Activated B cell treated with CpG ODN at 0.5 μM for 24 hours (primary cell): ENCODE measurements at regions of chr15 and their contacts with region 1.

Region 1: GRCh38 chr15:99704444-99704838 is 28.8 kb downstream of the LYSMD4 start:
- DNase-seq: no peak
- ATAC-seq: peak; percentile 83
- H3K4me3 Mint-ChIP-seq: no peak overlapping the region
- H3K27ac Mint-ChIP-seq: peak overlapping the region; percentile 24
- H3K4me1 Mint-ChIP-seq: peaks cover 27% of the 10 kb centered on the region
- H3K27me3 Mint-ChIP-seq: no peaks in the 10 kb centered on the region
- CTCF ChIP-seq: no peak

Region 2: GRCh38 chr15:99135194-99135593 is 569.2 kb before region 1 on chr15:
- CTCF ChIA-PET with region 1: no interaction called
- POLR2A ChIA-PET with region 1: no interaction called
- intact Hi-C with region 1: no loop called
- DNase-seq: no peak
- ATAC-seq: no peak
- H3K4me3 Mint-ChIP-seq: no peak overlapping the region
- H3K27ac Mint-ChIP-seq: no peak overlapping the region
- H3K4me1 Mint-ChIP-seq: no peaks in the 10 kb centered on the region
- H3K27me3 Mint-ChIP-seq: no peaks in the 10 kb centered on the region
- CTCF ChIP-seq: no peak

Region 3: GRCh38 chr15:99265541-99266070 is 438.8 kb before region 1 on chr15:
- CTCF ChIA-PET with region 1: interaction called, 10 read pairs
- POLR2A ChIA-PET with region 1: no interaction called
- intact Hi-C with region 1: no loop called
- DNase-seq: no peak
- ATAC-seq: no peak
- H3K4me3 Mint-ChIP-seq: no peak overlapping the region
- H3K27ac Mint-ChIP-seq: no peak overlapping the region
- H3K4me1 Mint-ChIP-seq: no peaks in the 10 kb centered on the region
- H3K27me3 Mint-ChIP-seq: no peaks in the 10 kb centered on the region
- CTCF ChIP-seq: no peak

Region 4: GRCh38 chr15:99282121-99282520 is 422.3 kb before region 1 on chr15:
- CTCF ChIA-PET with region 1: interaction called, 143 read pairs
- POLR2A ChIA-PET with region 1: interaction called, 4 read pairs
- intact Hi-C with region 1: loop called (anchors 1 kb)
- DNase-seq: no peak
- ATAC-seq: no peak
- H3K4me3 Mint-ChIP-seq: no peak overlapping the region
- H3K27ac Mint-ChIP-seq: no peak overlapping the region
- H3K4me1 Mint-ChIP-seq: peaks cover 11% of the 10 kb centered on the region
- H3K27me3 Mint-ChIP-seq: no peaks in the 10 kb centered on the region
- CTCF ChIP-seq: no peak

Region 5: GRCh38 chr15:99371180-99372103 is 333.0 kb before region 1 on chr15:
- CTCF ChIA-PET with region 1: interaction called, 27 read pairs
- POLR2A ChIA-PET with region 1: no interaction called
- intact Hi-C with region 1: loop called (anchors 1 kb)
- DNase-seq: no peak
- ATAC-seq: peak; percentile 73
- H3K4me3 Mint-ChIP-seq: no peak overlapping the region
- H3K27ac Mint-ChIP-seq: peak overlapping the region; percentile 10
- H3K4me1 Mint-ChIP-seq: peaks cover 16% of the 10 kb centered on the region
- H3K27me3 Mint-ChIP-seq: no peaks in the 10 kb centered on the region
- CTCF ChIP-seq: no peak

Region 6: GRCh38 chr15:99507504-99508310 is 196.7 kb before region 1 on chr15:
- CTCF ChIA-PET with region 1: interaction called, 36 read pairs
- POLR2A ChIA-PET with region 1: interaction called, 27 read pairs
- intact Hi-C with region 1: loop called (anchors 2 kb)
- DNase-seq: no peak
- ATAC-seq: no peak
- H3K4me3 Mint-ChIP-seq: peak overlapping the region; percentile 50
- H3K27ac Mint-ChIP-seq: peak overlapping the region; percentile 97
- H3K4me1 Mint-ChIP-seq: peaks cover 96% of the 10 kb centered on the region
- H3K27me3 Mint-ChIP-seq: no peaks in the 10 kb centered on the region
- CTCF ChIP-seq: no peak

Region 7: GRCh38 chr15:99692825-99693224 is 11.6 kb before region 1 on chr15:
- CTCF ChIA-PET with region 1: interaction called, 10 read pairs
- POLR2A ChIA-PET with region 1: interaction called, 3 read pairs
- intact Hi-C with region 1: no loop called
- DNase-seq: no peak
- ATAC-seq: no peak
- H3K4me3 Mint-ChIP-seq: no peak overlapping the region
- H3K27ac Mint-ChIP-seq: no peak overlapping the region
- H3K4me1 Mint-ChIP-seq: peaks cover 2% of the 10 kb centered on the region
- H3K27me3 Mint-ChIP-seq: no peaks in the 10 kb centered on the region
- CTCF ChIP-seq: no peak

Region 8: GRCh38 chr15:99733268-99734039 is 29.0 kb after region 1 on chr15 and contains the start of gene LYSMD4:
- CTCF ChIA-PET with region 1: interaction called, 14 read pairs
- POLR2A ChIA-PET with region 1: interaction called, 18 read pairs
- intact Hi-C with region 1: loop called (anchors 2 kb)
- DNase-seq: peak; percentile 95
- ATAC-seq: peak; percentile 99
- H3K4me3 Mint-ChIP-seq: peak within 1 kb of the TSS; percentile 85
- H3K27ac Mint-ChIP-seq: peak within 1 kb of the TSS; percentile 83
- H3K4me1 Mint-ChIP-seq: peaks cover 14% of the 10 kb centered on the region
- H3K27me3 Mint-ChIP-seq: no peaks in the 10 kb centered on the region
- CTCF ChIP-seq: no peak
- total RNA-seq, gene LYSMD4: 4.7 and 6.1 TPM in 2 replicates

Region 9: GRCh38 chr15:100318884-100319283 is 614.4 kb after region 1 on chr15:
- CTCF ChIA-PET with region 1: no interaction called
- POLR2A ChIA-PET with region 1: no interaction called
- intact Hi-C with region 1: no loop called
- DNase-seq: no peak
- ATAC-seq: no peak
- H3K4me3 Mint-ChIP-seq: no peak overlapping the region
- H3K27ac Mint-ChIP-seq: no peak overlapping the region
- H3K4me1 Mint-ChIP-seq: no peaks in the 10 kb centered on the region
- H3K27me3 Mint-ChIP-seq: peaks cover 2% of the 10 kb centered on the region
- CTCF ChIP-seq: no peak